ENCODE measurements at regions of chr21 and their contacts with region 1.

Region 1: DNA sequence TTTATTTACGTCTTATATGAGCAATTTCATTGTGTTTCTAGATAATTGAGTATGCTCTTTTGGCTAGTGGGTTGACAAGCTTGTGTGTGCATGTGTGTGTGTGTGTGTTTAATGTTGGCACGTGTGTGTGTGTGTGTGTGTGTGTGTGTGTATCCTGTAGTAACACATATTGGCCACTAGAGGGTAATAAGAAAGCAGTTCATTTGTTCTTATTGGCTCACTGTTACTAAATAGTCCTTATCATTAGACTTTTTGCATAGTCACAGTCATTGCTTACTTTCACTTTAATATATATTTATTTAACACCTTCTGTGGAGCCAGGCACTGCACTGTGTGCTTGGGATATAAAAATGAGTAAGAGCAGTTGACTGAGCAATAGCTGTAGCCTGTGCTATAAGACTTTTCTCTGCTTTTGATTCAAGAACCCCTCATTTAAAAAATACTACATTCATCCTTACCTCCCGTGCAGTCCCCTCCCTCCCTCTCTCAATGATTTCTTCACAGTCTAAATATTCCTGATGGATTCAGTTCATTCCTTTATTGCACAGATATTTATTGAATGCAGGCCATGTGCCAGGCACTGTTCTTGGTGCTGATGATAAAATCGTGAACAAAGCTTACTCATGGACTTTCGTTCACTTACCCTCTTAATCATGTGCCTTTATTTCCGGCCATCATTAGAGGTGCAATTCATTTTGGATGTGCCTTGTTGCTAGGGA is 96.7 kb downstream of the DYRK1A start:
- DNase-seq: no peak
- H3K4me3 Mint-ChIP-seq: no peak overlapping the region
- H3K27ac Mint-ChIP-seq: no peak overlapping the region
- H3K4me1 Mint-ChIP-seq: peaks cover 52% of the 10 kb centered on the region
- H3K27me3 Mint-ChIP-seq: no peaks in the 10 kb centered on the region

Region 2: GRCh38 chr21:37475186-37475868 is 12.1 kb after region 1 on chr21:
- CTCF ChIA-PET with region 1: interaction called, 10 read pairs
- POLR2A ChIA-PET with region 1: interaction called, 5 read pairs
- DNase-seq: no peak
- H3K4me3 Mint-ChIP-seq: no peak overlapping the region
- H3K27ac Mint-ChIP-seq: peak overlapping the region; percentile 2
- H3K4me1 Mint-ChIP-seq: peaks cover 23% of the 10 kb centered on the region
- H3K27me3 Mint-ChIP-seq: no peaks in the 10 kb centered on the region

Measured in activated CD4-positive, alpha-beta memory T cell treated with anti-CD3 and anti-CD28 coated beads, Interleukin-2, amount 10 ng/mL, durations not matched to agents 7 days and 5 days (primary cell).